ENCODE measurements at regions of chr7 and their contacts with region 1.

Region 1: GRCh38 chr7:155796381-155797261 is 15.6 kb downstream of the SHH start:
- DNase-seq: peak; percentile 71 to 80 (median 78)
- ATAC-seq: peak; percentile 90 to 96 (median 94)
- H3K4me3 ChIP-seq: peak overlapping the region; percentile 32 to 60 (median 45)
- H3K27ac ChIP-seq: peak overlapping the region in 2 of 3 donors; percentile 52 to 73
- H3K4me1 ChIP-seq: peaks cover 0 to 9% (median 0%) of the 10 kb centered on the region in 4 donors
- H3K27me3 ChIP-seq: no peaks in the 10 kb centered on the region
- CTCF ChIP-seq: peak; percentile 89 to 92 (median 90)
- POLR2A ChIP-seq: no peak

Region 2: DNA sequence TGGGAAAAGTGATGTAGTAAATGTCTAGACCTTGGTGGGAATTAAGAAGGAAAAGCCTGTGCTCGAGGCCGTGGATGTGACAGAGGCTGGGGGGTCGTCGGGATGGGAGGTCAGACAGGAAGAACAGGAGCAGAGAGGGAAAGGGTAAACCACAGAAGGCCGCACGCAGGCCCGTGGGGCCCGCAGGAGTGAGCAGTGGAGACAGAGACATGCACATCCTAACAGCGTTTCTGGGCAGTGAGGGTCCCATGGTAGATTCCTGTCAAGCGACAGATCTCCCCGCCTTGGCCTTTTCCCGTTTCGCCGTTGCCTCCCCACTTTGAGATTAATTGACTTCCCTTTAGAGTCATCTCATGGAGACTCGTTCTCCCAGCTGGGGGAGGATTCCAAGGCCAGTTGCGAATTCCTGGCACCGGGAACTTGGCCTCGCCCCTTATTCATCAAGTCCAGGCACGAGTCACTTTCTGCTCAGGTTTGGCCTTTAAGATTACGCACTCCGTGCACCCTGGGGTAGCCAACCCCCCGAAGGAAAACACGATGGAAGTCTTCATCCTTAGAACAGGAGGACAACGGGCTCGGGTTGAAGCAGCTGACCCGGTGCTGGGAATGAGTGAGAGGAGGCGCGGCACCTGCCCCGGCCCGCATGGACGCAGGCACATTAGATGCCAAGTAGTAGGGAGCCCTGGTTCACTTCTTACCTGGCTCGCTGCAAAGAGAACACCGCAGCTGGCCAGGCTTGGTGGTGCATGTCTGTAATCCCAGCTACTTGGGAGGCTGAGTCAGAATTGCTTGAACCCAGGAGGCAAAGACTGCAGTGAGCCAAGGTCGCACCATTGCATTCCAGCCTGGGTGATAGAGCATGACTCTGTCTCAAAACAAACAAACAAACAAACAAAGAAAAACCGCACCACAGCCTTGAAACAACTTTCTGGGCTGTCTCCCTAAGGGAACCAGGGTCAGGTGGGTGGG is 330.8 kb after region 1 on chr7:
- intact Hi-C with region 1: no loop called
- DNase-seq: no peak
- ATAC-seq: no peak
- H3K4me3 ChIP-seq: no peak overlapping the region
- H3K27ac ChIP-seq: no peak overlapping the region
- H3K4me1 ChIP-seq: no peaks in the 10 kb centered on the region
- H3K27me3 ChIP-seq: no peaks in the 10 kb centered on the region
- CTCF ChIP-seq: no peak
- POLR2A ChIP-seq: no peak

Region 3: GRCh38 chr7:156460858-156461627 is 664.4 kb after region 1 on chr7:
- intact Hi-C with region 1: loop called in 1 of 2 experiments (anchors 10 kb)
- DNase-seq: no peak
- ATAC-seq: no peak
- H3K4me3 ChIP-seq: no peak overlapping the region
- H3K27ac ChIP-seq: no peak overlapping the region
- H3K4me1 ChIP-seq: no peaks in the 10 kb centered on the region
- H3K27me3 ChIP-seq: no peaks in the 10 kb centered on the region
- CTCF ChIP-seq: no peak
- POLR2A ChIP-seq: no peak

Region 4: GRCh38 chr7:156473476-156474240 is 677.0 kb after region 1 on chr7:
- intact Hi-C with region 1: loop called (anchors 10 kb)
- DNase-seq: peak; percentile 53 to 64 (median 58)
- ATAC-seq: peak; percentile 85 to 91 (median 87)
- H3K4me3 ChIP-seq: no peak overlapping the region
- H3K27ac ChIP-seq: no peak overlapping the region
- H3K4me1 ChIP-seq: peaks cover 0 to 10% (median 2%) of the 10 kb centered on the region in 4 donors
- H3K27me3 ChIP-seq: no peaks in the 10 kb centered on the region
- CTCF ChIP-seq: peak; percentile 61 to 82 (median 78)
- POLR2A ChIP-seq: no peak

Measured in right lobe of liver (tissue), 6 donors.